Activated CD4-positive, alpha-beta T cell treated with anti-CD3 and anti-CD28 coated beads, Interleukin-2, amount 10 ng/mL, durations not matched to agents 24 days and 14 days (primary cell): ENCODE measurements at regions of chr4 and their contacts with region 1.

Region 1: GRCh38 chr4:168514249-168514852 is 17.5 kb downstream of the PALLD start:
- DNase-seq: peak; percentile 59
- H3K4me3 Mint-ChIP-seq: no peak overlapping the region
- H3K27ac Mint-ChIP-seq: no peak overlapping the region
- H3K4me1 Mint-ChIP-seq: peaks cover 26% of the 10 kb centered on the region
- H3K27me3 Mint-ChIP-seq: peaks cover 25% of the 10 kb centered on the region

Region 2: DNA sequence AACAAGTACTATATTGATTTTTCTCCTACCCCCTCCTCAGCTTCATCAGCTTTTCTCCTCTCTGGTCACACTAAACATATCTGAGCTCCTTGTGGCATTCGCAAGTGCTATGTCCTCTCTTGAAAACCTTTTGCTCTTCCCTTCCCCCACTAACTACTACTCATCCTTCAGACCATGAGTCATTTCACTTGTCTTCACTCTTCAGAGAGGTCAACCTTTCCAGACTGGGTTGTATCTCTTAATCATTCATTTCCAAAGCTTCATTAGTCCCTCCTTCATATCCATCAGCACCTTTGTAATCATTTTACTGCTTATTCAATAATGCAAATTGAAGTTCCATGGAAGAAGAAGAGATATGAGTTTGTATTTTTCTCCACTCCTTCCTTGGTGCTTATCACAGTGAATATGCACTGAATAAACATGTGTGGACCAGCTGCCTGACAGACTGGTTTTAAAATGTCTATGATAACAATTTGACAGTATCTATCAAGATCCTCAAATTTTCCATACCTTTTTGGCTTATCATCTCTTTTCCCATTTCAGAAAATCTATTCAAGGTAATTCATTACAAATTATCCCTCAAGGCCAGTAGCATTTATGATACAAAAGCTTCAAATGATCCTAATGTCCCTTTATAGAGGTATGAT is 62.5 kb before region 1 on chr4:
- intact Hi-C with region 1: loop called (anchors 2 kb)
- DNase-seq: no peak
- H3K4me3 Mint-ChIP-seq: no peak overlapping the region
- H3K27ac Mint-ChIP-seq: peak overlapping the region; percentile 51
- H3K4me1 Mint-ChIP-seq: peaks cover 25% of the 10 kb centered on the region
- H3K27me3 Mint-ChIP-seq: no peaks in the 10 kb centered on the region

Region 3: GRCh38 chr4:168560184-168560827 is 46.0 kb after region 1 on chr4:
- intact Hi-C with region 1: no loop called
- DNase-seq: no peak
- H3K4me3 Mint-ChIP-seq: no peak overlapping the region
- H3K27ac Mint-ChIP-seq: no peak overlapping the region
- H3K4me1 Mint-ChIP-seq: no peaks in the 10 kb centered on the region
- H3K27me3 Mint-ChIP-seq: peaks cover 19% of the 10 kb centered on the region

Region 4: GRCh38 chr4:168710353-168710946 is 196.1 kb after region 1 on chr4:
- intact Hi-C with region 1: loop called (anchors 10 kb)
- DNase-seq: peak; percentile 61
- H3K4me3 Mint-ChIP-seq: no peak overlapping the region
- H3K27ac Mint-ChIP-seq: no peak overlapping the region
- H3K4me1 Mint-ChIP-seq: peaks cover 11% of the 10 kb centered on the region
- H3K27me3 Mint-ChIP-seq: peaks cover 6% of the 10 kb centered on the region

Region 5: DNA sequence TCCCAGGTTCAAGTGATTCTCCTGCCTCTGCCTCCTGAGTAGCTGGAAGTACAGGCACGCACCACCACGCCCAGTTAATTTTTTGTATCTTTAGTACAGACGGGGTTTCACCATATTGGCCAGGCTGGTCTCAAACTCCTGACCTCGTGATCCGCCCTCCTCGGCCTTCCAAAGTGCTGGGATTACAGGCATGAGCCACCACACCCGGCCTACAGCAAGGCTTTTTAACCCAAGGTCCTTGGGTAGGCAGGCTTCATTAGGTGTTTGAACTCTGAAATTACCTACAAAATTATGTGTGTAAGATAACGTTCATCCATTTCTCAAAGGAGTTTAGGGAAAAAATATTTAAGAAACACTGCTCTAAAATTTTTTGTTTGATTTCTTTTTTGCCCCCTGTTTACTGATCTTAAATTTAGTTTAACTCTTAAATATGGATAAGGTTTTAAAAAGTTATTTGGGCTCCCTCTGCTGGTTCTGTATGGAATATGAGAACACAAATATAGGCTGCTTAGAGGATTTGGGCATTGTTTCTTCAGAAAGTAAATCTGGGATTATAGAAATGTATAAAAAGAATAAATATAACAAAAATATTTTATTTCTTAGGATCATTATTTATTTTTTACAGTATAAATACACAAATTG is 402.9 kb after region 1 on chr4:
- intact Hi-C with region 1: loop called (anchors 1 kb)
- DNase-seq: peak; percentile 62
- H3K4me3 Mint-ChIP-seq: no peak overlapping the region
- H3K27ac Mint-ChIP-seq: no peak overlapping the region
- H3K4me1 Mint-ChIP-seq: no peaks in the 10 kb centered on the region
- H3K27me3 Mint-ChIP-seq: no peaks in the 10 kb centered on the region

Region 6: GRCh38 chr4:169485791-169486742 is 971.7 kb after region 1 on chr4:
- intact Hi-C with region 1: loop called (anchors 10 kb)
- DNase-seq: peak; percentile 84
- H3K4me3 Mint-ChIP-seq: no peak overlapping the region
- H3K27ac Mint-ChIP-seq: no peak overlapping the region
- H3K4me1 Mint-ChIP-seq: no peaks in the 10 kb centered on the region
- H3K27me3 Mint-ChIP-seq: no peaks in the 10 kb centered on the region